ENCODE measurements at regions of chr9 and their contacts with region 1.

Region 1: DNA sequence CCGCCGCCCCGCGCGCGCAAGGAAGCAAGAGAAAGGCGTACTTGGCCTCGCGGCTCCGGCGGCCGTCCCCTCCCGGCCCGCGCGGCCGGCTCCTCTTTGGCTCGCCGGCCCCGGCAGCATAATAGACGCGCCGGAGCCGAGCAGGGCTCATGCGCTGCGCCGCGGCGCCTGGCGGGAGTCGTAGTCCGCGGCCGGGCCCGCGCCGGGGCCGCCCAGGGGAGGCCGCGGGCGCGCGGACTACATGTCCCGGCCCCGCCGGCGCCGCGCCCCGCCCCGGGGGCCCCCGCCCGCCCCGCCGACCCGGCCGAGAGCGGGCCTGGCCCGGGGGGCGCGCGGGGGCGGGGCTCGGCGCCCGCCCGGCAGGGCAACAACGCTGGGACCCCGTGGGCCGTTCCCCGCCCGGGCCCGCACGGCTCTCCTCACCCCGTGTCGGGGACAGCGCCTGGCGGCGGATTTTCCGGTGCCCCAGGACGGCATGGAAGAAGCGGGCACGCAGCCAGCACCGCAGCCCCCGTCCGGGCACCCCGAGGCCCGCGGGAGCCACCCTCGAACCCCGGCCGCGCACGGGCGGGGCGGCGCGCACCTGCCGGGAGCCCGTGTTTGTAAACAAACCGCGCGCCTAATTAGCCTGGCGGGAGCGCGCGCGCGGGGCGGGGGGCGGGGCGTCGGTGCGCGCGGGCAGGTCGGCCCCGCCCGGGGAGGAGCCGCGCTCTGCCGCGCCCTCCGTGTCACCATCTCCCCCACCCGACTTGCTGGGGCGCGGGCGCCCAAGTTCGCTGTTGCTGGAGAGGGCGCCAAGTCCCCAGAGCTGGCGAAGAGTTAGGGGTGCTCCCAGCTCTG is at the start of gene BRD3:
- DNase-seq: peak; percentile 95
- ATAC-seq: peak; percentile 97
- total RNA-seq, gene BRD3: 31.6 TPM

Region 2: DNA sequence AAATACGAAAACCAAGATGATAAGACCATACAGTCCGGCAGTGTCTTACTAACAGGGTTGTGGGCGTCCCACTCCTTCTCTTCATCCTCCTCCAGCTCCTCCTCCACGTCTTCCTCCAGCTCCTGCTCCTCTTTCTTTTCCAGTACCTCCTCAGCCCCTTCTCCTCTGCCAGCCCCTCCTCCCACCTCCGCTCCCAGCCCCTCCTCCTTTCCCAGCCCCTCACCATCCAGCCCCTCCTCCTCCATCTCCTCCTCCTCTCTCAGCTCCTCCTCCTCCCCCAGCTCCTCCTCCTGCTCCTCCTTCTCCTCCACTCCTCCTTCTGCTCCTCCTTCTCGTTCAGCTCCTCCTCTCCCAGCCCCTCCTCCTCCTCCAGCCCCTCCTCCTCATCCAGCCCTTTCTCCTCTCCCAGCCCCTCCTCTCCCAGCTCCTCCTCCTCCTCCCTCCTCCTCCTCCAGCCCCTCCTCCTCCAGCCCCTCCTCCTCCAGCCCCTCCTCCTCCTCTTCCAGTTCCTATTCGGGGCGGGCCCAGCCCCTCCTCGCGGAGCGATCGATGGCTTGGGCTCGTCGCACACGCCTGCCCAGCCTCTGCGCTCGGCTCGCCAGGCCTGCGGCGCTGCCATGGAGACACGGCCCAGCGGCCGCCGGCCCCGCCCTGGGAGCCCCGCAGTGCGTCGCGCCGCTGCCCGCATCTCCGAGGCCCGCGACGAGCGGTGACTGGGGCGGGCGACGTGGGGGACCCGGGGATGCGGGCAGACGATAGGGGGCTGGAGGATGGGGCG is 43.1 kb before region 1 on chr9 and contains the start of gene BRD3OS:
- intact Hi-C with region 1: loop called (anchors 1 kb)
- DNase-seq: peak; percentile 99
- ATAC-seq: peak; percentile 97
- total RNA-seq, gene BRD3OS: 6.2 TPM

Region 3: DNA sequence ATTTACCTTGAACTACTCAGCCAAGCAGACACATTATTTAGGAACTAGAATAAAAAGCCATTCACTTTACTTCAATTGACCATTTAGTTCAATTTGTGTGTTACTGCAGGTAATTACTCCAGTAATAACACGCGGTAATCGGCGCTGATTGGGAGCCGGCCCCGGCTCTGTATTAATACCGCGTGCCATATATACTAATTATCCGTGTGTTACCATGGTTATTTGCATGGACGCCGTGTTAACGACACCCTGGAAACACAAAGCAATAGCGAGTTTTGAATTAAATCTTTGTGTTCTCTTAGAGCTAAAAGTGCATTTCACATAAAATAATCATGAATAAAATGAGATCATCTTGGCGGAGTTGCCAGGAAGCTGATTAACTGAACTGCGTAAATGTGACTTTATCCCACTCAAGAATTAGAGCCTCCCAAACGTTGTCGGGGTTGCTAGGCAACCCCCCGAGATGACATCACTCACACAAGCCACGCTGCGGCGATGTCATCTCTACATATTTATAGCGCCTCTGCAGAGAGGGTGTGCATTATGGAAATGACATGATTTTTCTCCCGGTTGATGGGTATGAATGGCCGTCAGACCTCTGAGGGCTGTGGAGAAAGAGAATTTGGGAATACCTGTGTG is 137.7 kb after region 1 on chr9:
- intact Hi-C with region 1: no loop called
- DNase-seq: peak; percentile 85
- ATAC-seq: peak; percentile 69

Measured in Right ventricle myocardium inferior (tissue), 1 donor.